Thyroid gland (tissue), 4 donors: ENCODE measurements at regions of chr21 and their contacts with region 1.

Region 1: DNA sequence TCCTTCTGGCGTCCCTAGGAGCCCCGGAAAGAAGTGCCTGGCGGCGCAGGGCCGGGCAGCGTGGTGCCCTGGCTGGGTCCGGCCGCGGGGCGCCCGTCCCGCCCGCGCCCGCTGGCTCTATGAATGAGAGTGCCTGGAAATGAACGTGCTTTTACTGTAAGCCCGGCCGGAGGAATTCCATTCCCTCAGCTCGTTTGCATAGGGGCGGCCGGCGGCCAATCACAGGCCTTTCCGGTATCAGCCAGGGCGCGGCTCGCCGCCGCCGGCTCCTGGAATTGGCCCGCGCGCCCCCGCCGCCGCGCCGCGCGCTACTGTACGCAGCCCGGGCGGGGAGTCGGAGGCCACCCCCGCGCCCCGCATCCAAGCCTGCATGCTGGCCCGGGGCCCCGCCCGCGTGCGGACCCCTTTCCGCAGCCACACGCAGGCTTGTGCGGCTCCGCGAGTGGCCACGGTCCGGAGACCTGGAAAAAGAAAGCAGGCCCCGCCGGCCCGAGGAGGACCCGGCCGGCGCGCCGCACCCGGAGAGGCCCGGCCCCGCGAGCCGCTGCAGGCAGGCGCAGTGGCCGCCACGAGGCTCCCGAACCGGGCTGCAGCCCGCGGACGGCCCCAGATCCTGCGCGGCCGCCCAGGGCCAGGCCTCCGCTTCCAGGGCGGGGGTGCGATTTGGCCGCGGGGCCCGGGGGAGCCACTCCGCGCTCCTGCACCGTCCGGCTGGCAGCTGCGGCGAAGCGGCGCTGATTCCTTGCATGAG is 160.4 kb downstream of the RUNX1 start:
- DNase-seq: peak; percentile 93 to 94
- H3K4me3 ChIP-seq: peak overlapping the region; percentile 53 to 74 (median 56)
- H3K27ac ChIP-seq: peak overlapping the region; percentile 53 to 92 (median 74)
- H3K4me1 ChIP-seq: peaks cover 11 to 32% of the 10 kb centered on the region in 2 donors
- H3K27me3 ChIP-seq: peaks cover 28% of the 10 kb centered on the region
- CTCF ChIP-seq: peak in 2 of 6 experiments; percentile 3 to 6
- POLR2A ChIP-seq: peak in 1 of 2 donors; percentile 84

Region 2: DNA sequence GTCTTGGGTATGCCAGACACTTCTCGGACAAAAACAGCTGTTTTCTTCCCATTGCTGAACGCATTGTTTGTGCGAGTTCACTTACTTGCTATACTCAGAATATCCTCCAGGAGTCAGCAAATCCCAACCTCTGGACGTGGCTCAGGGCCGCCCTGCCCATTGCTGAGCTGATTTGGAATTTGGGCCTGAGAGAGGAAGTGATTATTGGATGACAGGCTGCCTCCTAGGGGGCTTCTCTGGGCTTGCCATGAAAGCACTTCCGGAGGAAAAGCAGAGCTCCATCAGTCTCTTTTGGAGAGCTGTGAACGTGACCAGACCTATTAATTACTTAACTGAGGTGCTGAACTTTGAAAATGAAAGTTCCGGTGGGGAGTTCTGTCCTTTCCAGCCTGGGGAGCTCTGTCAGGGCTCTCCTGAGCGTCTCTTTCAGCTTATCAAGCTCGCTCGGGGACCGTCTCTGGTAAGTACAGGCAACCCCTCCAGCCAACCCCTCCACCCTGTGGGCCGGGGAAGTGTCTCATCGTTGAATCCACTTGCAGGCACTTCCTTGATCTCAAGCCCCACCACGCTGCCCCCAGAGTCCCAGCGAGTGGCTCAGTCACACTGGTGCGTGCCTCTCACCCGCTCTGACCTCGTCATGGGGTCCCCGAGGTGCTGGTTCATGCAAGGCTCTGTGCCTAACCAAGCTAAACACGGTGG is 143.0 kb before region 1 on chr21:
- intact Hi-C with region 1: loop called (anchors 10 kb)
- DNase-seq: peak; percentile 50 to 55
- H3K4me3 ChIP-seq: no peak overlapping the region
- H3K27ac ChIP-seq: no peak overlapping the region
- H3K4me1 ChIP-seq: peaks cover 0 to 20% of the 10 kb centered on the region in 2 donors
- H3K27me3 ChIP-seq: no peaks in the 10 kb centered on the region
- CTCF ChIP-seq: peak; percentile 43 to 92 (median 90)
- POLR2A ChIP-seq: no peak

Region 3: DNA sequence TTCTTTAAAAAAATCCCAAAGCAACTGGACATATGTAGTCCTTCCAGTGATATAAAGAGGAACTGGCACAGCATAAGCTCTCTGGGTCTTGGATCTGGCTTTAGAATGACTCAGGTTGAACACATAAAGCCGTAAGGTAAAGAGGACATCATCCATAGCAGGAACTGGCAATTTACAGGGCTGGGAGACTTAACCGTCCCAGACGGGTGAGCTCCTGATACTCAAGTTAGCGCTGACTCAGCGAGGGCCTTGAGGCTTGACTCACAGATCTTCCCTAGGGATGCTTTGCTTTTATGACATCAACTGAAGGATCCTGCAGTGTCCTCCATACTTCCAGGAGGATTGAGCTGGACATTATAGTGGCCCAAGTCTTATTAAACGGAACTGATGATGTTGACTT is 65.8 kb before region 1 on chr21:
- intact Hi-C with region 1: loop called (anchors 10 kb)
- DNase-seq: no peak
- H3K4me3 ChIP-seq: no peak overlapping the region
- H3K27ac ChIP-seq: no peak overlapping the region
- H3K4me1 ChIP-seq: peaks cover 0 to 10% of the 10 kb centered on the region in 2 donors
- H3K27me3 ChIP-seq: no peaks in the 10 kb centered on the region
- CTCF ChIP-seq: no peak
- POLR2A ChIP-seq: no peak

Region 4: GRCh38 chr21:35400233-35400957 is 511.7 kb after region 1 on chr21:
- intact Hi-C with region 1: loop called (anchors 10 kb)
- DNase-seq: peak in 1 of 2 donors; percentile 3
- H3K4me3 ChIP-seq: no peak overlapping the region
- H3K27ac ChIP-seq: no peak overlapping the region
- H3K4me1 ChIP-seq: no peaks in the 10 kb centered on the region
- H3K27me3 ChIP-seq: no peaks in the 10 kb centered on the region
- CTCF ChIP-seq: peak in 4 of 6 experiments; percentile 44 to 67 (median 54)
- POLR2A ChIP-seq: no peak

Region 5: DNA sequence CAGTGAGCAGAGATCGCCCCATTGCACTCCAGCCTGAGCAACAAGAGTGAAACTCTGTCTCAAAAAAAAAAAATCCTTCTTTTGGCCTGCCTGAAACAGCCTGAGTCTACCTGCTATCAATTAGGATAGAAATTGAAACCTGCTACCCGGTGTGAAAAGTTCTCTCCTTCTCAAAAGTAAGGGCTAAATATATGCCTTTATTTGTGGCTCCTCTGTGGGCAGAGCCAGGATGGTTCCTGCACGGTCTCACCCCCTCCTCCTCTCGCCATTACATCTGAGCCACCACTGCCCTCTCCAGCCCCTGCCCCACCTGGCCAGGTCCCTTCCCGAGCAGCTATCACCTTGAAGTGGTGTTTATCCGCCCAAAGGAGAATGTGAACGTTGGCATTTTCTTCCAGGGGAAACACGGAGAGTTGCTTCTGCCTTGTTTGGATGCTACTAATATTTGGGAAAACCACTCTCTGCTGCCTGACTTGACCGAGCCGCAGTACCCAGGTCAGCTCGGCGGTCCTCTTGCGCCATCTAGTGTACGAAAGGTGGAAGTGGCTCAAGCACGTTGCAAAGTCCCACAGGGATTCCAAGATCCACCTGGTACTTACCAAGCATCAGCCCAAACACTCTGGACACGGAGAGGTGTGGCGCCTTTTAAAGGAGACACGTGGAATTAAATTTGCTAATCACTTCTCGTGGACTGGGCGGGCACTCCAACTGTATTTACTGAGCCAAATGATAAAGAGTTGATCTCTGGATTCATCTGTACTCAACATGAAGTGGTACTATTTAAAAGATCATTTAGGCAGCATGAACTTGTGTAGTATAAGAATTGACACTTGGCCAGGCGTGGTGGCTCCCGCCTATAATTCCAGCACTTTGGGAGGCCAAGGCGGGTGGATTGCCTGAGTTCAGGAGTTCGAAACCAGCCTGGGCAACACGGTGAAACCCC is 1139.7 kb after region 1 on chr21:
- intact Hi-C with region 1: loop called (anchors 10 kb)
- DNase-seq: peak; percentile 69 to 75
- H3K4me3 ChIP-seq: no peak overlapping the region
- H3K27ac ChIP-seq: no peak overlapping the region
- H3K4me1 ChIP-seq: no peaks in the 10 kb centered on the region
- H3K27me3 ChIP-seq: no peaks in the 10 kb centered on the region
- CTCF ChIP-seq: peak; percentile 81 to 96 (median 89)
- POLR2A ChIP-seq: no peak